ENCODE measurements at regions of chr9 and their contacts with region 1.

Region 1: DNA sequence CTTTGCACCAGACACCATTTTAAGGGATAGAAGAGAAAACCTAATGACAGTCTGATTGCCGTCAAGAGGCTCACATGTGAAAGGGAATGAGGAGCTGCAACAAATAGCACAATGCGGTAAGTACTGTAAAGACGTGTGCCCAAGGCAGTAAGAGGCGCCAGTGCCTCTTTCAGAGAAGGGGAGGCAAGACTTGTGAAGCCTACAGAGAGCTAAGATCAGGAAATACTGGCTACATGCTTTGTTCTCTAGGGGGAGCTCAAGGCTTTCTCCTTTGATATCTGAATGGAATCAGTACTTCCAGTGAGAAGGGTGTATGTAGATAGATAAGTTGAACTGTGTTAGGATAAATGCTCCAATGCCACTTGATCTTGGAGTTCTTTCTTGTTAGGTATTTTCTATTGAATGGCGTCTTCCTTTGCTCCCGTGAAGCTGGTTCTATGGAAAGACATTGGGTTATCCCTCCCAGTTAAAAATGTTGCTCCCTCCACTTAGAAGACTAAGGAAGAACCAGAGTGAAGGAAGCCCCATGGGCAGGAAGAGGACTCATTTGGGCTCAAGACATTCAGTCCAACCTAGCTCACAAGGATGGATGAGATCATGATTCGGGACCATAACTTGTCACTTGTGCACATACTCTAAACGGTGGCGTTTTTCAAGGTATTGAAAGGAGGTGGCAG is 23.5 kb upstream of the ALDOB start:
- DNase-seq: no peak
- ATAC-seq: peak; percentile 67
- H3K4me3 Mint-ChIP-seq: no peak overlapping the region
- H3K27ac Mint-ChIP-seq: no peak overlapping the region
- H3K4me1 Mint-ChIP-seq: no peaks in the 10 kb centered on the region
- H3K27me3 Mint-ChIP-seq: peaks cover 24% of the 10 kb centered on the region

Region 2: GRCh38 chr9:101530077-101530711 is 71.1 kb after region 1 on chr9:
- CTCF ChIA-PET with region 1: interaction called, 31 read pairs
- DNase-seq: peak; percentile 80
- ATAC-seq: peak; percentile 28
- H3K4me3 Mint-ChIP-seq: no peak overlapping the region
- H3K27ac Mint-ChIP-seq: no peak overlapping the region
- H3K4me1 Mint-ChIP-seq: peaks cover 14% of the 10 kb centered on the region
- H3K27me3 Mint-ChIP-seq: peaks cover 7% of the 10 kb centered on the region